ENCODE measurements at regions of chr15 and their contacts with region 1.

Region 1: DNA sequence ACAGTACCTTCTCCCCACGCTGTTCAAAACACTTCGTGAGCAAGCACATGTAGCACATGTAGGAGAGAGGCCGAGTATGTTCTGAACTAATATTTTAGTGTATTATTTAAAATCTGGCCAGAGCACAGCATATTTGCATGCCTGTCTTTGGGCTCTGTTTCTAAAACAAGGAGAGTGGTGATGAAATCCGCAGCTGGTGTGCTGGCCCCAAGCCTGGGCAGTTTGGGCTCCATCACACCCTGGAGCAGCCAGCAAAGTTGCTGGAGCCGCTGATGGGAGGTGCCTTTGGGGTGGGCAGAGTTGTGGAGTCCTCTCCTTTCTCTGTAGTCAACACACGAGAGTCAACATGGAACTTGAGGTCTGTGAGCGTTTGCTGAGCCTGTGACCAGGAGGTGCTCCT is 116.6 kb downstream of the SLCO3A1 start:
- DNase-seq: no peak
- ATAC-seq: no peak
- H3K4me3 Mint-ChIP-seq: no peak overlapping the region
- H3K27ac Mint-ChIP-seq: no peak overlapping the region
- H3K4me1 Mint-ChIP-seq: peaks cover 19% of the 10 kb centered on the region
- H3K27me3 Mint-ChIP-seq: no peaks in the 10 kb centered on the region
- CTCF ChIP-seq: no peak

Region 2: DNA sequence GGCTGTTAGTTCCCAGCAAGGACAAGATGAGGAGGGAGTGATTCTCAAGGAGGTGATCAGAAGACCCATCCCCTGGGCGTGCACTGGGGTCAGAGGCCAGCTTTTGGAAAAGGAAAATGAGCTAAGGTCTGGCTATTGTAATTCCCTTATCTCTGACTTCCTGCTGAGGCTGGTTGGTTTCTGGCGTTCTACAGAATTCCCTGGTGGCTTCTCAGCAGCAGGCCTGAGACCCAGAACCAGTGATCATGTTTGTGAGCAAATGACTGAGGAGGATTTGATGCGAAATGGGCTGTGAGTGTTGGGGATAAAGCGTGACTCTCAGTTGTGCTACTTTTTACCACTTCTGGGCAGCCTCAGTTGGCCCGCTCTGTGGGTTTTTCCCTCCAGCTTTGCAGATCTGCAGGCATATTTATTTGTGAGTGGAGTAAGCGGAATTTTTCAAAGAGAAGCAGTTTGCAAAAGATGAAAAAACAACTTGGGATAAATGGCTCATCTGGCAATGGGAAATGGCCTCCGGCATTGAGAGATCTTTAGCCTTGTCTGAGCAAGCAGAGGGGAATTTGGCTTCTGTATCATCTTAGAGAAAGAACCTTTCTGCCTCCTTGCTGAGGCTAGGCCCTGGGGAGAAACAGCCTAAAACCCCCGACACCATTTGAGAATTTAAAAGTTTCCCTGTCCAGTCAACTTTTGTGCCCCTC is 14.0 kb before region 1 on chr15:
- CTCF ChIA-PET with region 1: interaction called, 12 read pairs
- POLR2A ChIA-PET with region 1: no interaction called
- DNase-seq: no peak
- ATAC-seq: peak; percentile 71
- H3K4me3 Mint-ChIP-seq: no peak overlapping the region
- H3K27ac Mint-ChIP-seq: peak overlapping the region; percentile 86
- H3K4me1 Mint-ChIP-seq: peaks cover 16% of the 10 kb centered on the region
- H3K27me3 Mint-ChIP-seq: no peaks in the 10 kb centered on the region
- CTCF ChIP-seq: no peak

Region 3: GRCh38 chr15:91980502-91981267 is 10.5 kb after region 1 on chr15:
- CTCF ChIA-PET with region 1: interaction called, 10 read pairs
- POLR2A ChIA-PET with region 1: no interaction called
- DNase-seq: no peak
- ATAC-seq: no peak
- H3K4me3 Mint-ChIP-seq: no peak overlapping the region
- H3K27ac Mint-ChIP-seq: no peak overlapping the region
- H3K4me1 Mint-ChIP-seq: 0 out of 2 replicates have a peak, but pooled peaks cover under 1% of the 10 kb centered on the region
- H3K27me3 Mint-ChIP-seq: no peaks in the 10 kb centered on the region
- CTCF ChIP-seq: no peak

Region 4: DNA sequence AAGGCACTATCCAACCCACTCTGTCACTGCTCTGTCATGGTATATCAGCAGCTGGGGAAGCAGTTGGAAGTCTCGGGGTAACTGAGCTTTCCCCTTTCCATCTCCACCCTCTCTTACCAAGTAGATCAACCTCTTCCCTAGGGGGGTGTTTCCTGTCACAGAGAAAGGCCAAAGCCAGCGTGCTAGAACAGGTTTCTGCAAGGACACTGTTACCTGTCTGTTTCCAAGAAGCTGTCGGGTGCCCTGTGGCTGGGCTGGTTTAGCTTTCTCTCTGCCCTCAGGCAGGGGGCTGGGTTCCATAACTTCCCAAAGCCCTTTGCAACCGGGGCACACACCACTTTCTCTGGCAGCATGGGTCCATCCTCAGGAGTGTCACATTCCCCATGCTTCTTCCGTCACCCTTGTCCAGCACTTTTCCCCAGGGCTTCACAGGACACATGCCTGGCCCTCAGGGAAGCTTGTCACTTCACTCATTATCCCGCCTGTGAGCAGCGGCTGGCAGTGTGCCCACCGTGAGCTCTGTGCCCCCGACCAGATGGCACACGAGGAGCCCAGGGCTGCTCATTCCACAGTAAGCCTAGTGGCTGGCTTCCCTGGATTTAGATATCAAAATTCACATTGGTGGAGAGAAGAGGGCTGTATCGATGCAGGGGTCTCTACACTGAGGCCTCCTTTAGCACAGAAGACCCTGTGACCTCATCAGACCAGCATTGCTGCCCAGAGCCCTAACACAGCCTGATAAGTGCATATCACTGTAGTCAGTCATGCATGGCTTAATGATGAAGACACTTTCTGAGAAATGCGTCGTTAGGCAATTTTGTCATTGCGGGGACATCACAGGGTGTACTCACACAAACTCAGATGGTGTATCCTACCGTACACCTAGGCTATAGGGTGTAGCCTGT is 89.2 kb after region 1 on chr15:
- CTCF ChIA-PET with region 1: no interaction called
- POLR2A ChIA-PET with region 1: no interaction called
- DNase-seq: no peak
- ATAC-seq: no peak
- H3K4me3 Mint-ChIP-seq: no peak overlapping the region
- H3K27ac Mint-ChIP-seq: no peak overlapping the region; the same call in 1 of the 2 replicates
- H3K4me1 Mint-ChIP-seq: no peaks in the 10 kb centered on the region
- H3K27me3 Mint-ChIP-seq: no peaks in the 10 kb centered on the region
- CTCF ChIP-seq: no peak

Region 5: GRCh38 chr15:92097474-92098178 is 127.5 kb after region 1 on chr15:
- CTCF ChIA-PET with region 1: no interaction called
- POLR2A ChIA-PET with region 1: no interaction called
- DNase-seq: peak; percentile 76
- ATAC-seq: peak; percentile 84
- H3K4me3 Mint-ChIP-seq: no peak overlapping the region
- H3K27ac Mint-ChIP-seq: peak overlapping the region; percentile 31; the same call in 1 of the 2 replicates
- H3K4me1 Mint-ChIP-seq: peaks cover 36% of the 10 kb centered on the region
- H3K27me3 Mint-ChIP-seq: no peaks in the 10 kb centered on the region
- CTCF ChIP-seq: peak; percentile 65